ENCODE measurements at regions of chr18 and their contacts with region 1.

Region 1: GRCh38 chr18:54679318-54680149 is 88.5 kb downstream of the DYNAP start:
- DNase-seq: peak; percentile 46
- H3K4me3 Mint-ChIP-seq: no peak overlapping the region
- H3K27ac Mint-ChIP-seq: peak overlapping the region; percentile 14
- H3K4me1 Mint-ChIP-seq: peaks cover 31% of the 10 kb centered on the region
- H3K27me3 Mint-ChIP-seq: no peaks in the 10 kb centered on the region
- CTCF ChIP-seq: peak; percentile 25

Region 2: GRCh38 chr18:54636217-54636616 is 43.3 kb before region 1 on chr18:
- CTCF ChIA-PET with region 1: no interaction called
- intact Hi-C with region 1: no loop called
- DNase-seq: no peak
- H3K4me3 Mint-ChIP-seq: no peak overlapping the region
- H3K27ac Mint-ChIP-seq: no peak overlapping the region
- H3K4me1 Mint-ChIP-seq: no peaks in the 10 kb centered on the region
- H3K27me3 Mint-ChIP-seq: no peaks in the 10 kb centered on the region
- CTCF ChIP-seq: no peak

Region 3: GRCh38 chr18:54766619-54767018 is 87.1 kb after region 1 on chr18:
- CTCF ChIA-PET with region 1: interaction called, 4 read pairs
- intact Hi-C with region 1: loop called (anchors 2 kb)
- DNase-seq: no peak
- H3K4me3 Mint-ChIP-seq: peak overlapping the region; percentile 23
- H3K27ac Mint-ChIP-seq: peak overlapping the region; percentile 82
- H3K4me1 Mint-ChIP-seq: peaks cover 85% of the 10 kb centered on the region
- H3K27me3 Mint-ChIP-seq: no peaks in the 10 kb centered on the region
- CTCF ChIP-seq: no peak

Region 4: GRCh38 chr18:54828281-54828881 is 148.8 kb after region 1 on chr18 and contains the start of gene RAB27B:
- CTCF ChIA-PET with region 1: interaction called, 3 read pairs
- intact Hi-C with region 1: loop called (anchors 5 kb)
- DNase-seq: peak; percentile 92
- H3K4me3 Mint-ChIP-seq: peak within 1 kb of the TSS; percentile 95
- H3K27ac Mint-ChIP-seq: peak within 1 kb of the TSS; percentile 84
- H3K4me1 Mint-ChIP-seq: peaks cover 67% of the 10 kb centered on the region
- H3K27me3 Mint-ChIP-seq: no peaks in the 10 kb centered on the region
- CTCF ChIP-seq: no peak
- total RNA-seq, gene RAB27B: 38.3 and 60.6 TPM in 2 replicates

Region 5: GRCh38 chr18:54983041-54983686 is 303.6 kb after region 1 on chr18:
- CTCF ChIA-PET with region 1: interaction called, 4 read pairs
- intact Hi-C with region 1: loop called (anchors 1 kb)
- DNase-seq: peak; percentile 20
- H3K4me3 Mint-ChIP-seq: no peak overlapping the region
- H3K27ac Mint-ChIP-seq: no peak overlapping the region
- H3K4me1 Mint-ChIP-seq: peaks cover 6% of the 10 kb centered on the region
- H3K27me3 Mint-ChIP-seq: no peaks in the 10 kb centered on the region
- CTCF ChIP-seq: peak; percentile 70

Region 6: GRCh38 chr18:55265984-55266383 is 586.5 kb after region 1 on chr18:
- CTCF ChIA-PET with region 1: no interaction called
- intact Hi-C with region 1: no loop called
- DNase-seq: no peak
- H3K4me3 Mint-ChIP-seq: no peak overlapping the region
- H3K27ac Mint-ChIP-seq: no peak overlapping the region
- H3K4me1 Mint-ChIP-seq: peaks cover 7% of the 10 kb centered on the region
- H3K27me3 Mint-ChIP-seq: no peaks in the 10 kb centered on the region
- CTCF ChIP-seq: no peak

Measured in Calu3 (cell line).